ENCODE measurements at regions of chr2 and their contacts with region 1.

Region 1: DNA sequence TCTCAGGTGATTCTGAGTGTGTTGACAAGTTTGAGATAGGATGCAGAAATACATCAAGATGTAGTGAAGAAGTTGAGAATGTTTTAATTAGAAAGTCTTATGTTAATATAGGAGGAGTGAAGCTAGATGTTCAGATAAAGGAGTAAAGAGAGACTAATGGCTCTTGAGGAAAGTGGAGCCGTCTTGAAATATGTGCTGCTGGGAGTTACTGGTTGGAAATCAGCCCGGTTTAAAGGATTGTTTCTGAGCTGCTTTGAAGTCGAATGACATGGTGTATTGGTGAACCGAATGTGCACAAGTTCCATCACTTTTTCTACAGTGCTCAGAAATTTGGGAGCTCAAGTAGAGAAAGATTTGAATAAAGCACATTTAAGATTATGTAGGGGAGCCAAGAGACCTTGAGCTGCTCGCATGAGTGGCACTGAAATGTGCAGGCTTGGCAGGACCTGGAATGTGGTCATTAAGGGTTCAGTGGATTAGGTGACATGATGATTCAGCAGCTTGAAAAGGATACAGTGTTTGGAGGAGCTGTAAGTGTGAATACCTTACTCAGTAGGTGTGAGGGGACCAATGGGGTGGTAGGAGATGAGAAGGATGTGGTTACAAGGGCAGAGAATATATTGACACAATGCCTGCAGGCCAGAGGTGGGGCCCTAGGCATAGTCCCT is 68.6 kb downstream of the CAB39 start:
- DNase-seq: peak; percentile 56
- H3K4me3 Mint-ChIP-seq: no peak overlapping the region
- H3K27ac Mint-ChIP-seq: peak overlapping the region; percentile 83
- H3K4me1 Mint-ChIP-seq: peaks cover 73% of the 10 kb centered on the region
- H3K27me3 Mint-ChIP-seq: no peaks in the 10 kb centered on the region

Region 2: DNA sequence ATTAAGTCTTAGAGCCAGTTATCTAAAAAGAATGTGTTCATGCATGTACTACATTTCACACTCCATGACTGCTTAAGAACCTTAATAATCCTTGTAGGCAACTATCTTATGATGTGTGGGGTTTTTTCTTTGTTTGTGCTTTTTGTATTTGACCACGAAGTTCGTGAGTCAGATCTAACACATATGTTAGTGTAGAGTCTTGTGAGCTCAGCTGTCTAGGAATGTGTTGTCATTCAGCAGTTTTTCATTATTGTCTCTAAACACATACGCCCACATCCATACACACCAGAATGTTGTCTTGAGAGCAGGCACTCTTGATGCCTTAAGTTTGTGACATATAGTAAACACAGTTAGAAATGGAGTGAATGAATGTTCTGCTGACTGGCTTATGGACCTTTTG is 30.2 kb before region 1 on chr2:
- CTCF ChIA-PET with region 1: no interaction called
- POLR2A ChIA-PET with region 1: no interaction called
- DNase-seq: no peak
- H3K4me3 Mint-ChIP-seq: no peak overlapping the region
- H3K27ac Mint-ChIP-seq: no peak overlapping the region
- H3K4me1 Mint-ChIP-seq: peaks cover 67% of the 10 kb centered on the region
- H3K27me3 Mint-ChIP-seq: no peaks in the 10 kb centered on the region

Region 3: DNA sequence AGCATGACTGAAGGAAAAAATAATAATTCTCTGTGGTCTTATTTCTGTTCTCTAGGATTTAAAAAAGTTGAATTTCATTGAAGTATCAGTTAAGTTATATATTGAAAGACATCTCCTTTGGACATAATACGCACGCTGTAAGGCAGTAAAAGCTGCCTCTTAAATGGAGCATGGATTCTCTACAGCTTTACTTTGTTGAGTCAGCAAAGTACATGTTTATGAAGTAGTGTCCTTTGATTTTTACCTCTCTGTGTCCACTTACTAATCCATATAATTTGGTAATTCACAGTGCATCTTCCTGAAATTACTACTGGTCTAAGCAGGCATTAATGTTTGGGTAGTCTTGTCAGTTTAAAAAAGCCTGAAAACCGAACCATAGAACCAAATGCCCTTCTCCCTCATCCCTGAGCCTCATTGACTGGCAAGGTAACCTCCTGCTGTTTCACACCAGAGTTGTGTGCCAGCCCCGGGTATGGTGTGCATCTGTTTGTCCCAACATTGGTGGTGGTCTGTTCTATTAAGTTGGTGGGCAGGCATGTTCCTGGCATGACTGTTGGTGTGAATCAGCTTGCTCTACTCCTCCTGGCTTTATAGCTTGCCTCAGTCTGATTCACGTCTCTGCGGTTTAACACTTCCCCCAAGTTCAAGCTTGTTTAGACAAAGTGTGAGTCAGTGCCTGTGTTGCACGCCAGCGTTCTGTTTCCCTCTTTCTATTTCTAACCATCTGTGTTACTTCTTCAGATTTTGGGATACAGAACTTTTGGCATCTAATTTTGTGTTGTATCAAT is 12.5 kb after region 1 on chr2:
- CTCF ChIA-PET with region 1: interaction called, 33 read pairs
- POLR2A ChIA-PET with region 1: interaction called, 3 read pairs
- DNase-seq: peak; percentile 77
- H3K4me3 Mint-ChIP-seq: peak overlapping the region; percentile 62
- H3K27ac Mint-ChIP-seq: peak overlapping the region; percentile 90
- H3K4me1 Mint-ChIP-seq: peaks cover 53% of the 10 kb centered on the region
- H3K27me3 Mint-ChIP-seq: no peaks in the 10 kb centered on the region

Region 4: GRCh38 chr2:230798769-230799399 is 17.6 kb after region 1 on chr2:
- CTCF ChIA-PET with region 1: interaction called, 33 read pairs
- POLR2A ChIA-PET with region 1: interaction called, 3 read pairs
- DNase-seq: peak; percentile 80
- H3K4me3 Mint-ChIP-seq: no peak overlapping the region
- H3K27ac Mint-ChIP-seq: peak overlapping the region; percentile 43
- H3K4me1 Mint-ChIP-seq: peaks cover 32% of the 10 kb centered on the region
- H3K27me3 Mint-ChIP-seq: no peaks in the 10 kb centered on the region

Region 5: DNA sequence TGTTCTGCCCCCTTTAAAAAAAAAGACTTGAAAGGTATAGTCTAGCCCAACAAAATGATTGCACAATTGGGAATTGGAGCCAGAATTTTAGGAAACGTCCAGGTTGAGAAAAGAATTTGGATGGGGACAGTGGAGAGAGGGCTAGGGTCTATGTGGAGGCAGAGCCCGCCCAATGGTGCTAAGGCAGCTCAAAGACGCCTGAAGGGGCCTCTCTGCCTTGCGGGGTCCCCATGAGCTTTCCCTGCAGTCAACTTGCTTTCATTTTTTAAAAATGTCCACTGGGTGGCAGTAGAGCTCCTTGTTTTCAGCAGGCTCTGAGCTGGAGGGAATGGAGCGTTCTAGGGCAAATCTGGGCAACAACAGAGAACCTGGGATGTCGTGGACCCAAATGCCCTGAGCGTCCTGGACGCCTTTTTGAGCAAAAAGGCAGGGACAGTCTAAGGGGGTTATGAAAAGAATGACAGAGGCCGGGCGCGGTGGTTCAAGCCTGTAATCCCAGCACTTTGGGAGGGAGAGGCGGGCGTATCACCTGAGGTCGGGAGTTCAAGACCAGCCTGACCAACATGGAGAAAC is 43.2 kb after region 1 on chr2:
- CTCF ChIA-PET with region 1: no interaction called
- POLR2A ChIA-PET with region 1: no interaction called
- DNase-seq: peak; percentile 76
- H3K4me3 Mint-ChIP-seq: peak overlapping the region; percentile 11
- H3K27ac Mint-ChIP-seq: no peak overlapping the region
- H3K4me1 Mint-ChIP-seq: peaks cover 23% of the 10 kb centered on the region
- H3K27me3 Mint-ChIP-seq: peaks cover 34% of the 10 kb centered on the region

Region 6: GRCh38 chr2:230847883-230848388 is 66.7 kb after region 1 on chr2:
- CTCF ChIA-PET with region 1: no interaction called
- POLR2A ChIA-PET with region 1: no interaction called
- DNase-seq: peak; percentile 86
- H3K4me3 Mint-ChIP-seq: no peak overlapping the region
- H3K27ac Mint-ChIP-seq: no peak overlapping the region
- H3K4me1 Mint-ChIP-seq: peaks cover 9% of the 10 kb centered on the region
- H3K27me3 Mint-ChIP-seq: peaks cover 41% of the 10 kb centered on the region

Region 7: DNA sequence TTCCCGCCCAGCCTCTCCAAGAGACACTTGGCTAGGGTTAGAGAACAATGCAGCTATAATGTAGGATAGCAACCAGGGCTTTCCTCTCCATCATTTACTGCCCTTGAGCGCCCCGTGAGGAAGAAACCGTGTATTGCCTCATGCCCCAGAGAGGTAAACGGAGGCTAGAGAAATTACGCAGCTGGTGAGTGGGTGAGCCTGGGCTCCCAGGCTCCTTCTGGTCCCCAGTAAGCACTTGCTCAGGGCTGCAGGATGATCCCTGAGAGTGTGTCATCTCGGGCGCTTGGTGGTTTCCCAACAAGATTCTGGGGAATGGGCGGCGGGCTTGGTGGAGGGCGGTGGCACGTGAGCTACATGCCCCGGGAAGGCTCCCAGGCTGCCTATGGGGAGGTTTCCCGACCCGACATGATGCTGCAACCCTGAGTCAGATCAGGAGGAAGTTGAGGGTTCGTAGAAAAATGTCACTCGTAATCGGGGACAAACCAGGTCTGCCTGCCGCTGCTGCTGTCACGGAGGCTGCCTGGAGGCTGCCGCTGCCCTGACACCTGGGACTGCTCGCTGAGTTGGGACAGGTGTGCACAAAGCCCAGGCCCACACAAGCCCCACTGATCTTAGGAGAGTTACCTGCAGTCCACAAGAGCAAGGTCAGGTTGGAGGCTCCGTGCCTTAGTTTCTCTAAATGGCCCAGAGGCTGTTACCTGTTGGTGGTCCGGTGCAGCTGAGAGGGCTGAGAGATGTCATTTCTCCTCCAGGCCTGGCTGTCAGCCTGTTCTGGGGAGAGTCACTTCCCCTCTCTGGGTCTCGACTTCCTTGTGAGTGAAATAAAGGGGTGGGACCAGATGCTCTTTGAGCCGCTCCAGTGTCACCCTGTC is 143.4 kb after region 1 on chr2 and contains the start of gene GPR55:
- CTCF ChIA-PET with region 1: no interaction called
- POLR2A ChIA-PET with region 1: no interaction called
- DNase-seq: peak; percentile 41
- H3K4me3 Mint-ChIP-seq: peak within 1 kb of the TSS; percentile 77
- H3K27ac Mint-ChIP-seq: peak within 1 kb of the TSS; percentile 90
- H3K4me1 Mint-ChIP-seq: peaks cover 54% of the 10 kb centered on the region
- H3K27me3 Mint-ChIP-seq: peaks cover 4% of the 10 kb centered on the region
- total RNA-seq, gene GPR55: 9.2 to 9.4 TPM

Measured in activated CD4-positive, alpha-beta T cell treated with anti-CD3 and anti-CD28 coated beads, Interleukin-2, amount 10 ng/mL, durations not matched to agents 7 days and 5 days (primary cell).